Gastrocnemius medialis (tissue), 4 donors: ENCODE measurements at regions of chr7 and their contacts with region 1.

Region 1: DNA sequence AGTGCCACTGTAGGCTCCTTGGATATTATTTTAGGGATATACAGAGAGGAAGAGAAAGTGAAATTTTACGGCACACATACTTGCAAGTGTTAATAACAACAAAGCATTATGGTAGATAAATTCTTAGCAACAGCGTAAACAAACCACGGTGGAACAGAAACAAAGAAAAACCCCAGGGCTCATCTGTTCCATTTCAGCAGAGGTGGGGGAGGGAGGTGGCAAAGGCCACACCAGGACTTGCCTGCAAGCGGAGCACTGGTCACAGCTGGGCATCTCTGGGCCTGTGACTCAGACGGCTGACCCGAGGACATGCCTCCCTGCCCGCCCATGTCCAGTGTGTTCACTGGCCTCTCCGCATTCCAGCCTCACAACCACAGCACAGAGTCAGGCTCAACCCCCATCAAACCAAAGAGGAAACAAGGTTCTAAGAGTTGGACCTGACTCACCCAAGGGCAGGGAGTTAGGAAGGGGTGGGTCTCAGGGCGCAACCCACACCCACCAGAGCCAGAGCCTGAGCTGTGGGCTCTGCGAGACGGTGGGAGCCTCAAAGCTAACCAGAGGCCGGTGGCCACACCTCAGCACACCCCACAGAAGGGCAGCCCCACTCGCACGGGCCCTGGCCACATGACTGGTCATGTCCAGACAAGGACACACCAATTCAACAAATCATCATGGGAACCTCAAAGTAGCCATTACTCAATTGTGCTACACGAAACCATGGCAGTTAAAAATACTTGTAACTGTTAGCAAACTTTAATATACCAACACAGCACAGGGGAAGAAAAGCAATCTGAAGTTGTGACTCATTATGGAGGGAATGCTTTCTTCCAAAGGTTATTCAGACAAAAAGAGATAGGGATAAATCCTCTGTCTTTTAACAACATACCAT is 10.7 kb downstream of the ESYT2 start:
- DNase-seq: peak; percentile 92 to 96
- ATAC-seq: peak; percentile 85
- H3K4me3 ChIP-seq: peak overlapping the region; percentile 8 to 40 (median 34)
- H3K27ac ChIP-seq: peak overlapping the region; percentile 88 to 95 (median 93)
- H3K4me1 ChIP-seq: peaks cover 77 to 82% of the 10 kb centered on the region in 2 donors
- H3K27me3 ChIP-seq: no peaks in the 10 kb centered on the region
- CTCF ChIP-seq: peak in 1 of 5 experiments; percentile 21
- POLR2A ChIP-seq: peak; percentile 46 to 60

Region 2: GRCh38 chr7:158646766-158647447 is 171.7 kb before region 1 on chr7:
- in situ Hi-C with region 1: no loop called
- intact Hi-C with region 1: no loop called
- DNase-seq: no peak
- ATAC-seq: no peak
- H3K4me3 ChIP-seq: no peak overlapping the region
- H3K27ac ChIP-seq: no peak overlapping the region
- H3K4me1 ChIP-seq: no peaks in the 10 kb centered on the region
- H3K27me3 ChIP-seq: no peaks in the 10 kb centered on the region
- CTCF ChIP-seq: no peak
- POLR2A ChIP-seq: no peak

Region 3: DNA sequence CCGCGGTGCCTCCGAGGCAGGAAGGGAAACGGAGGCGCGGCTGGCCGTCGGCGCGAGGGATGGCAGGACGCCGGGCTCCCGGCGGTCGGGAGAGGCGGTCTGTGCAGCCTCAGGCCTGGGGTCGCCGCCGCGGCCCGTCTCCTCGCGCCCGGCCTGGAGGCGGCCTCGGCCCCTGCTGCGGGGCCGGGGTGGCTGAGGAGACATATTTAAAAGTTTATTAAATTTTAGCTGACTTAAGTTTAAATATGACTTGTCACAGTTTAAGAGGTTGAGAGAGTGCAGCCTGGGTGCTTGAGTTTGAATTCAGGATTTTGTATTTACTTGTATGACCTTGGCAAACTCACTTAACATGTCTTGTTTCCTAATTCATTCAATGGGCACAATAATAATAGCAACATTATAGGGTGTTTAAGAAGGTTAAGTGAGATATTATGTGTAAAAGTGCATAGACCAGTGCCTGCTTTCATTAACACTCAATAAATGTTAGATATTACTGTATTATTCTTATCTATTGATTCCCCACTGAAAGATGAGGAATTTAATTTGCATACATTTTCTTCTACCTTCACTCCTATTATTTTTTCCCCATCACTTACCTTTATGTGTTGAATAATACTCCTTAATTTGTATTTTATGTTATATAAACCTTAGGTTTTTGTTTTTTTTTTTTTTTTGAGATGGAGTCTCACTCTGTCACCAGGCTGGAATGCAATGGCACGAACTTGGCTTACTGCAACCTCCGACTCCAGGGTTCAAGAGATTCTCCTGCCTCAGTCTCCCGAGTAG is 38.5 kb after region 1 on chr7:
- in situ Hi-C with region 1: no loop called
- intact Hi-C with region 1: loop called (anchors 1 kb)
- DNase-seq: no peak
- ATAC-seq: peak in 1 of 2 donors; percentile 17
- H3K4me3 ChIP-seq: peak overlapping the region; percentile 70 to 98 (median 88)
- H3K27ac ChIP-seq: peak overlapping the region; percentile 87 to 94 (median 92)
- H3K4me1 ChIP-seq: peaks cover 14 to 42% of the 10 kb centered on the region in 2 donors
- H3K27me3 ChIP-seq: no peaks in the 10 kb centered on the region
- CTCF ChIP-seq: no peak
- POLR2A ChIP-seq: no peak

Region 4: DNA sequence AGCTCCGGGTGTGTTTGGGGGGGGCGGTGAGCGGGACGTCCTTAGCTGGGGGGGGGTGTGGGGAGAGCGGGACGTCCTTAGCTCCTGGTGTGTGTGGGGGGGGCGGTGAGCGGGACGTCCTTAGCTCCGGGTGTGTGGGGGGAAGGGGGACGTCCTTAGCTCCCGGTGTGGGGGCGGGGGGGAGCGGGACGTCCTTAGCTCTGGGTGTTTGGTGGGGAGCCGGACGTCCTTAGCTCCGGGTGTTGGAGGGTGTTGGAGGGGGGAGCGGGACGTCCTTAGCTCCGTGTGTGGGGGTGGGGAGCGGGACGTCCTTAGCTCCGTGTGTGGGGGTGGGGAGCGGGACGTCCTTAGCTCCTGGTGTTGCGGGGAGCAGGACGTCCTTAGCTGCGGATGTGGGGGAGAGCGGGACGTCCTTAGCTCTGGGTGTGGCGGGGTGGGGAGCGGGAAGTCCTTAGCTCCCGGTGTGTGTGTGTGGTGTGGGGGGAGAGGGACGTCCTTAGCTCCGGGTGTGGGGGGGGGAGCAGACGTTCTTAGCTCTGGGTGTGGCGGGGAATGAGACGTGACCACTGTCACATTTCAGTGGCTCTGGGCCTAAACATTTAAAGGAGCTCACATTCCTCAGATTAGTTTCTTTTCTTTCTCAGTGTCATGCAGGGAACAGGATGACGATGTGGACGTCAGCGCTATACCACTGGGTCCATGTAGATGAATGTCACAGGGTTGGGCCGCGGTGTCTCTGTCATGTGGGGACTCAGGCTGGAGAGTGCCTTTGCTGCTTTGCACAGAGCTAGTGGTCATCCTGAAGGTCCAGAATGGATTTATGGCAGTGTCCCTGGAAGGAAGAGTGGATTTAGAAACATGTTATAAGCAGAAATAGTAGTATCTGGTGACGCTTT is 45.3 kb after region 1 on chr7:
- in situ Hi-C with region 1: no loop called
- intact Hi-C with region 1: loop called (anchors 2 kb)
- DNase-seq: peak; percentile 86 to 90
- ATAC-seq: peak; percentile 80 to 85
- H3K4me3 ChIP-seq: peak overlapping the region; percentile 55 to 69 (median 62)
- H3K27ac ChIP-seq: peak overlapping the region; percentile 90 to 94 (median 92)
- H3K4me1 ChIP-seq: peaks cover 13 to 36% of the 10 kb centered on the region in 2 donors
- H3K27me3 ChIP-seq: no peaks in the 10 kb centered on the region
- CTCF ChIP-seq: no peak
- POLR2A ChIP-seq: peak; percentile 66 to 78

Region 5: GRCh38 chr7:159115601-159116501 is 297.3 kb after region 1 on chr7:
- in situ Hi-C with region 1: no loop called
- intact Hi-C with region 1: no loop called
- DNase-seq: no peak
- ATAC-seq: peak in 1 of 2 donors; percentile 21
- H3K4me3 ChIP-seq: no peak overlapping the region
- H3K27ac ChIP-seq: no peak overlapping the region
- H3K4me1 ChIP-seq: no peaks in the 10 kb centered on the region
- H3K27me3 ChIP-seq: no peaks in the 10 kb centered on the region
- CTCF ChIP-seq: peak in 1 of 5 experiments; percentile 28
- POLR2A ChIP-seq: no peak